ENCODE measurements at regions of chr2 and their contacts with region 1.

Region 1: DNA sequence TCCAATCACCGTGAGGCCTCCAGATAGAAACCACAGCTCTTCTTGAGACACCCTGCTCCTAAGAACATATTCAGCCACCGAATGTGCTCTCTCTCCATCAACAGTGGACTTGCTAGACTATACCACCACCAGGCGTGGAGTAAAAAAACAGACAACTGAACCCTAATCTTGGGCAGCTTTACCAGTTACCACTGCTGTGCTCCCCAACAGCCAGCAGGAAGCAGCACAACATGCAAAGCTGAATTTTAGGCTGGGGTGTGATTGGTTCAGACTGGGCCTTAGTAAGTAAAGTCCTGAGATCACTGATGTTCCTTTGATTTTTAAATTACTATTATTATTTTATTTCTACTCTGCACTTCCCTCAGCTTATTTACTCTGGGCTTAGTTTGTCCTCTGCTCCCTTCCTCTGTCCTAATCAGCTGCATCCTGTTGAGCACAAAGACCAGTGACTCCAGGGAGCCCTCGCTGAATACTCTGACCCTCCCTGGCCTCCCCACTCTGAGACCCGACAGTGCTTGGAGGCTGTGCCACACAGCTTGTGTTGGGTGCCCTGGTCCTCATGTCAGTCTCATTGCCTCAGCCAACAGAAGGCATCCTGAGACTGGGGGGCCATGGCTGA is 21.9 kb downstream of the MRPL35 start:
- DNase-seq: peak; percentile 50
- ATAC-seq: peak; percentile 77
- H3K4me3 Mint-ChIP-seq: no peak overlapping the region
- H3K27ac Mint-ChIP-seq: no peak overlapping the region
- H3K4me1 Mint-ChIP-seq: peaks cover 21% of the 10 kb centered on the region
- H3K27me3 Mint-ChIP-seq: no peaks in the 10 kb centered on the region
- CTCF ChIP-seq: peak; percentile 57

Region 2: DNA sequence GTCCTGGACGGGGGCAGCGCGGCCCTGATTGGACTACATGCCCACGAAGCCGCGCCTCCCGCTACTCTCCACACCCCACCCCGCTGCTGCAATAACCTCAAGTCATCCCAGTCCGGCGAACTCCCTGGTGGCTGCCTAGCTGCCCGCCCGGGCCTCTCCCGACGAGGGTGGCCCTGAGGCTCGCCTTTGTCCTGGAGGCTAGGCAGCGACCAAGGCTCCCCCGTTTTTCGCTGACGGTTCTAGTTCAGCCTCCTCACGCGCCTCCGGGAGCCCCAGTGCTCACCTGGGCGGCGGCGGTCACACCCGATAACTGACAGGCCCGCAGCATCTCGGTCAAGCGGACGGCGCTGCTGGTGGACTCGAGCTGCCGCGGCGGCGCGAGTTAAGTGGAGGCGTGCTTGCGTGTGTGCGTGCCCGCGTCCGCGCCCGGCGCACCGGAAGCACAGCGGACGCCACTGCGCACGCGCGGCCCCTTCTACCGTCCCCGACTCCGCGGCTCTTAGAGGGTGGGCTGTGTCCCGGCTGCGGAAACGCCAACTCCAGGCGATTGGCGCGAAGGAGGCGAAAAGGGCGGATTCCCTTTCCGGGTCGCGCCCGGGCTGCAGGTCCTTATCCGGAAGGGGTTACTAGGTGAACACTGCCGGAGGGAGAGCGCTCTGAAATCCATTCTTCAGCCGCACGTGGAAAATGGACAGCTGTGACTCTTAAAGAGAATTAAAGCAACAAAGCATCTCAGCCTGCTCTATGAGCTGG is 25.9 kb before region 1 on chr2 and contains the start of gene IMMT:
- CTCF ChIA-PET with region 1: interaction called, 5 read pairs
- POLR2A ChIA-PET with region 1: interaction called, 10 read pairs
- intact Hi-C with region 1: no loop called
- DNase-seq: peak; percentile 86
- ATAC-seq: peak; percentile 91
- H3K4me3 Mint-ChIP-seq: peak within 1 kb of the TSS; percentile 91
- H3K27ac Mint-ChIP-seq: peak within 1 kb of the TSS; percentile 90
- H3K4me1 Mint-ChIP-seq: peaks cover 59% of the 10 kb centered on the region
- H3K27me3 Mint-ChIP-seq: no peaks in the 10 kb centered on the region
- CTCF ChIP-seq: no peak
- total RNA-seq, gene IMMT: 90.3 and 93.0 TPM in 2 replicates

Region 3: GRCh38 chr2:86238354-86238753 is 17.2 kb after region 1 on chr2:
- CTCF ChIA-PET with region 1: interaction called, 16 read pairs
- POLR2A ChIA-PET with region 1: interaction called, 20 read pairs
- intact Hi-C with region 1: loop called (anchors 1 kb)
- DNase-seq: peak; percentile 55
- ATAC-seq: peak; percentile 99
- H3K4me3 Mint-ChIP-seq: peak overlapping the region; percentile 39
- H3K27ac Mint-ChIP-seq: peak overlapping the region; percentile 5
- H3K4me1 Mint-ChIP-seq: peaks cover 57% of the 10 kb centered on the region
- H3K27me3 Mint-ChIP-seq: no peaks in the 10 kb centered on the region
- CTCF ChIP-seq: no peak

Region 4: DNA sequence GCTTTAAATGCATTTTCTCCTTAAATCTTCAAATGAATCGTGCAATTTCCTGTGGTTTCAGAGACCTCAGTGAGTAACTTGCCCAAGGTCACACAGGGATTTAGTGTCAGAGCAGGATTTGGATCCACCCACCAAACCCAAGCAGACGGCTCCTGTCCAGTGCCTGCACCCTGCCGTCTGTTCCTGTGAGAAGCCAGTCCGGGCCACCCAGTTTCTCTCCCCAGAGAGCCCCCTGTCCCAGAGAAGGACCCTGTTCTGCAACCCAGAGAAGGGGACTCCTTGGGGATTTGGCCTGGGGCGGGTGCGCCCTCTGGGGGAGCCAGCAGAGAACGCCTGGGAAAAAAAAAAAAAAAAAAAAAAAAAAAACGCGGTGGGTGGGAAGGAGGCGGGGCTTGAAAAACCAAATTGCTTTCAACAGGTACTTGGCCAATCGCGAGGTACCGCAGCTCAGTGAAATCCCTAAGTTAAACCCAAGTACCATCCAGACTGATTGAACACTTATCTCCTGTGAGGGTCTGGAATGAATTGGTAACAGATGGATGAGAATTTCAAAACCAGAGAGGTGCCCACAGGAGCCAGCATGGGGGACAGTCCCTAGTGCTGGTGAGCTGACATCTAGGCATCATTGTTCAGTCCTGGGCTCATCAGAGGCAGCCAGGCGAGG is 147.1 kb after region 1 on chr2:
- CTCF ChIA-PET with region 1: interaction called, 45 read pairs
- POLR2A ChIA-PET with region 1: no interaction called
- intact Hi-C with region 1: loop called (anchors 1 kb)
- DNase-seq: peak; percentile 22
- ATAC-seq: peak; percentile 84
- H3K4me3 Mint-ChIP-seq: peak overlapping the region; percentile 35
- H3K27ac Mint-ChIP-seq: no peak overlapping the region
- H3K4me1 Mint-ChIP-seq: peaks cover 11% of the 10 kb centered on the region
- H3K27me3 Mint-ChIP-seq: no peaks in the 10 kb centered on the region
- CTCF ChIP-seq: no peak

Region 5: GRCh38 chr2:86562922-86563649 is 341.9 kb after region 1 on chr2 and contains the start of gene CHMP3:
- CTCF ChIA-PET with region 1: no interaction called
- POLR2A ChIA-PET with region 1: no interaction called
- intact Hi-C with region 1: loop called (anchors 5 kb)
- DNase-seq: peak; percentile 94
- ATAC-seq: peak; percentile 89
- H3K4me3 Mint-ChIP-seq: peak within 1 kb of the TSS; percentile 97
- H3K27ac Mint-ChIP-seq: peak within 1 kb of the TSS; percentile 98
- H3K4me1 Mint-ChIP-seq: peaks cover 38% of the 10 kb centered on the region
- H3K27me3 Mint-ChIP-seq: peaks cover under 1% of the 10 kb centered on the region
- CTCF ChIP-seq: no peak
- total RNA-seq, gene CHMP3: 61.4 and 66.9 TPM in 2 replicates